Activated T-helper 2 cell treated with anti-CD3 and anti-CD28 coated beads, Interferon-gamma antibody, Interleukin-2, Interleukin-4, amounts not matched to agents 10 μg/mL and 5 μg/mL and 100 μg/mL, durations not matched to agents 14 hours and 24 hours and 36 hours (primary cell): ENCODE measurements at regions of chr14 and their contacts with region 1.

Region 1: DNA sequence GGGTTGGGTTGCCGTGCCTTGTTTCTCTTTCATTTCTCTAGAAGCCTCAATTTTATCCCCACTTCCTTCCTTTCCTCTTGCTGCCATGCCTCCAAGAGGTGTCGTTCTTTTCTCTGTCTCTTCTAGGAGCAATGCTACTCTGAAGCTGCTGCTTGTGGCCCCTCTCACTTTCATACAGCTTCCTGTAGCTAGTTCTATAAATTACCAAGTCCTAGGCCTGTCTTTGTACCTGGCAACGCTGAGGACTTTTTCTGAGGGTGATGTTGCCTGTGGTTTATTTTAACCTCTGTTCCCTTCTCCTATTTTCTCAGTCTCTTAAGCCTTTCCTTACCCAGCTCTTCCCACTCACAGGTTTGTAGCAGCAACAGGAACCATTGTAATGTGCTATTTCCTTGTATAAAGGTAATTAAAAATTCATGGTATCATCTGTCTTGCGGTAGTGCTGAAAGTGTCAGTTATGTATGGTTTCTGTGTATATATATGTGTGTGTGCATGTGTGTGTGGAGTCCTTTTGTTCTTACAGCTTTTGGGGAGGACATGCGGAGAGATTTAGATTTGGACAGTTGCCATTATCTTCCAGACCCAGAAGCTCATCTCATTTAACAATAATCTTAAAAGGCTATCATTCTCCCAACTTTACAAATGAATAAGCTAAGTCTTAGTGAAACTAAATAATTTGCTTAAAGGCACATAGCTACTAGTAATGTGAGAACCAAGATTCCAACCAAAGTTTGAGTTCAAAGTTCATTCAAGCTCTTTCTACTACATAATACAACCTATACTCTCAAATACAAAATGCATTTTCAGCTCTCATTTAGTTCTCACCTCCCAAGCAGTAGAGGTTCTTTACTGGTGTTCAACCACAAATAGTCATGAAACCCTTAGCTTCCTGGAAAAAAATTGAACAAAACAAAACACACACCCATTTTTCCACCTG is 43.8 kb downstream of the DDHD1 start:
- DNase-seq: peak; percentile 72
- H3K4me3 Mint-ChIP-seq: no peak overlapping the region
- H3K27ac Mint-ChIP-seq: no peak overlapping the region
- H3K4me1 Mint-ChIP-seq: peaks cover 29% of the 10 kb centered on the region
- H3K27me3 Mint-ChIP-seq: no peaks in the 10 kb centered on the region

Region 2: DNA sequence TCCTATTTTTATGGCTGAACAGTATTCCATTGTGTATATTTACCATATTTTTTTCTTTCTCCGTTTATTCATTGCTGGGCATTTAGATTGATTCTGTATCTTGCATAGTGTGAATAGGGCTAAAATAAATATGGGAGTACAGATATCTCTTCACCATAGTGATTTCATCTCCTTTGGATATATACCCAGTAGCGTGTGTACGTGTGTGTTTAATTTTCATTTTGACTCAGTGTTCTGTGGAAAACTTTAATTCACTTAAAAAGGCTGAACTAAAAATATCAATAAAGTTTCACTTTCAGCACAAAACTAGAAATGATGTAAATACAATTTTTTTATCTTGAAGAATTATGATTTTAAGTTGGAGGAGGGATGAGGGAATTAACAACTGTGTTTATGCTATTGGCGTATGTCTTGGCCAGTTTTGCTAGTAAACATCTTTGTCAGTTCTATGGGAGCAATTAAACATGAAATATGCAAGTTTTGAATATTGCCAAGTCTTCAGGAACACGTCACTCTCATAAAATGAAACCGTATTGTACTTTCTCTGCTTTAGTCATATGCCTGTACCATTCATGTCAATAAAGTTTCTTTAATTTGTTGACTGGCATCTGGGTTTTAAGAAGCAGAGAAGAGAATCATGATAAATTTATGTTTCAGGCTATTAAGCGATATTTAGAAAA is 695.5 kb before region 1 on chr14:
- intact Hi-C with region 1: loop called (anchors 2 kb)
- DNase-seq: no peak
- H3K4me3 Mint-ChIP-seq: peak overlapping the region; percentile 67
- H3K27ac Mint-ChIP-seq: peak overlapping the region; percentile 97
- H3K4me1 Mint-ChIP-seq: peaks cover 66% of the 10 kb centered on the region
- H3K27me3 Mint-ChIP-seq: no peaks in the 10 kb centered on the region

Region 3: DNA sequence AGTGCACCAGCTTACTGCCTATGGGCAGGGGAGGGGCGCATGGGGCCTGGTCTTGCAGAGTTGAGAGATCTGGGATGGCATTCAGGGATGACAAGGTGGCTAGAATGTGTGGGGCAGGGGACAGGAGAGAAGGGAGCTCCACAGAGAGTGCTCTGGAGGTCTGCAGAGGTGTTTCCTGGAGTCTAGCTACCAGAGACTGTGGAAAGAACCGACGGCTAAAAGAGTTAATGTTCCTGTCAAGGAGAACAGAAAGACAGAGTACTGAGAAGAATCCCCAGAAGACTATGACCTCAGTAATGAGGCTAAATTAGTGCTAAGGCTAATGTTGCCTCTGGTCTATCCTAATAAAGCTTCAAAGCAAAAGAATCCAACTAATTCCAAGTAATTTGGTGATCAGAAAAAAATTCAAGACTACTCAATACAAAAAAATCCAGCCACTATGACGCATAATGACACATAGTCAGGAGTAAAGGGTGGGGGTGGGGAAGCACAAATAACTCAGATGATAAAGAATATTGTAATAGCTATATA is 203.2 kb before region 1 on chr14:
- intact Hi-C with region 1: no loop called
- DNase-seq: no peak
- H3K4me3 Mint-ChIP-seq: no peak overlapping the region
- H3K27ac Mint-ChIP-seq: no peak overlapping the region
- H3K4me1 Mint-ChIP-seq: peaks cover 3% of the 10 kb centered on the region
- H3K27me3 Mint-ChIP-seq: peaks cover 36% of the 10 kb centered on the region

Region 4: DNA sequence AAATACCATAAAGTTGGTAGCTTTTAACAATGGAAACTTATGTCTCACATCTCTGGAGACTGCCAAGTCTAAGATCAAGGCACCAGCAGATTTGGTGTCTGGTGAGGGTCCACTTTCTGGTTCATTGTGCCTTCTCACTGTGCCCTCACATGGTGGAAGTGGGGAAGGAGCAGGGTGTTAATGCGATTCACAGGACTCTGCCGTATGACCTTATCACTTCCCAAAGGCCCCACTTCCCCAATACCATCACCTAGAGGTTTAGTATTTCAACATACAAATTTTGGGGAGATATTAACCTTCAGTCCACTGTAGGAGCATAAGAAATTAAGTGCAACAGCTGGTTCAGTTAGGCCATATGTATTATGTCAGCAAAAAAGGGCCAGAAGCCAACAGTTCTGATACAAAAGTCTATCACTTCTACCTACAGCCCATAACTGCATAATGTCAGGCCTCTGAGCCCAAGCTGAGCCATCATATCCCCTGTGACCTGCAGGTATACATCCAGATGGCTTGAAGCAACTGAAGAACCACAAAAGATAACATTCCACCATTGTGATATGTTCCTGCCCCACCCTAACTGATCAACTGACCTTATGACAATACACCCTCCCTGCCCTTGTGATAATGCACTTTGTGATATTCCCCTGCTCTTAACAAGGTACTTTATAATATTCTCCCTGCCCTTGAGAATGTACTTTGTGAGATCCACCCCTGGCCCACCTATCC is 19.1 kb after region 1 on chr14:
- intact Hi-C with region 1: no loop called
- DNase-seq: no peak
- H3K4me3 Mint-ChIP-seq: no peak overlapping the region
- H3K27ac Mint-ChIP-seq: peak overlapping the region; percentile 35
- H3K4me1 Mint-ChIP-seq: peaks cover 20% of the 10 kb centered on the region
- H3K27me3 Mint-ChIP-seq: no peaks in the 10 kb centered on the region

Region 5: DNA sequence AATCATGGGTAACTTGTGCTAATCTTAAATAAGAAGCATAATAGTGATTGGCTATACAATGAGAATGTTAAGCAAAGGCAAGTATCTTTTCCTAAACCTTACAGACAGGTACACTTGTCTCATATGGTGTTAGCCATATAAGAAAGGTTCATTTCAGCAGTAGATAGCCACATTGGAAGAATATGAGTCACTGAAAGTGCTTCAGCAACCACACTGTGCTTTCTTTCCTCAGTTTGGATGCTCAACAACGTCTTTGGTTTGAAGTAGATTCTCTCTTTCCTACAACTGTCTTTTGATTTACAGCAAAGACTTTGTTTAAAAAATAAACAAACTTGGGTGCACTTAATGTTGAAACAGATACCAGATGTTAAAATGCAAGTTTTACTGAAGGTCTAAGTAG is 34.9 kb after region 1 on chr14:
- intact Hi-C with region 1: loop called (anchors 1 kb)
- DNase-seq: no peak
- H3K4me3 Mint-ChIP-seq: no peak overlapping the region
- H3K27ac Mint-ChIP-seq: peak overlapping the region; percentile 49
- H3K4me1 Mint-ChIP-seq: peaks cover 58% of the 10 kb centered on the region
- H3K27me3 Mint-ChIP-seq: no peaks in the 10 kb centered on the region

Region 6: DNA sequence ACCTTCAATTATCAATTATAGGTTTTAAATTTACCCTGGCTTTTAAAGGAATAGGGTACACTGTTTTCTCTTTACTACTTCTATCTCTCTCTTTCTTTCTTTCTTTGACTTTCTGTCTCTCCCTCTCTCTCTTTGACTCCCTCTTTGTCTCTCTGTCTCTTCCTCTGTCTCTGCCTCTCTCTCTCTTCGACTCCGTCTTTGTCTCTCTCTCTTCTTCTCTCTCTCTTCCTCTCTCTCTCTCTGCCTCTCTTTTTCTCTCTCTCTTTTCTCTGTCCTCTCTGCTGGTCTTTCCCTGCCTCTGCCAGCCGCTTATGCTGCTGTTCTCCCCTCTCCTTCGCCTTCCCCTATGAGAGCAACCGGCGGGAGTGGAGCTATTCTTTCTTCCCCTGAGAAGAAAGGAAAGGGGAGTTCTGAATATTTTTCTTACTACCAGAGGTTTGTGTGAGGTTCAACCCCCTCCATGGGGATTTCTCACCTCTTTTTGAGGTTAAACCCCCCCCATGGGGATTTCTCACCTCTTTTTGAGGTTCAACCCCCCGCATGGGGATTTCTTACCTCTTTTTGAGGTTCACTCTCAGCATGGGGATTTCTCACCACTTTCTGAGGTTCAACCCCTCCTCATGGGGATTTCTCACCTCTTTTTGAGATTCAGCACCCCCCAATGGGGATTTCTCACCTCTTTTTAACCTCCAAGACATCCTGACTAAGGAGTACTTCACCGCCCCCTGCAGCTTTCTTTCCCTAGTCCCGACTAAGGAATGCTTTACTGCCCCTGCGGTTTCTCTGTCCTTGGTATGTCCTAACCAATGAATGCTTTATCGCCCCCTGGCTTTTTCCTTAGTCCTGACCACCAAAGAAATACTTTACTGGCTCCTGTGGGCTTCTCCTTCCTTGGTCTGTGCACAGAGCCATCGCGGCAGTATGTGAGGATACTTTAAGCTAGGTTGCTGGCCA is 71.2 kb after region 1 on chr14:
- intact Hi-C with region 1: loop called (anchors 2 kb)
- DNase-seq: no peak
- H3K4me3 Mint-ChIP-seq: no peak overlapping the region
- H3K27ac Mint-ChIP-seq: peak overlapping the region; percentile 40
- H3K4me1 Mint-ChIP-seq: peaks cover 26% of the 10 kb centered on the region
- H3K27me3 Mint-ChIP-seq: peaks cover 1% of the 10 kb centered on the region

Region 7: GRCh38 chr14:53190938-53191337 is 81.6 kb after region 1 on chr14:
- intact Hi-C with region 1: loop called (anchors 1 kb)
- DNase-seq: no peak
- H3K4me3 Mint-ChIP-seq: no peak overlapping the region
- H3K27ac Mint-ChIP-seq: peak overlapping the region; percentile 84
- H3K4me1 Mint-ChIP-seq: peaks cover 33% of the 10 kb centered on the region
- H3K27me3 Mint-ChIP-seq: no peaks in the 10 kb centered on the region

Region 8: GRCh38 chr14:53432378-53432802 is 323.0 kb after region 1 on chr14:
- intact Hi-C with region 1: no loop called
- DNase-seq: peak; percentile 11
- H3K4me3 Mint-ChIP-seq: no peak overlapping the region
- H3K27ac Mint-ChIP-seq: no peak overlapping the region
- H3K4me1 Mint-ChIP-seq: peaks cover 10% of the 10 kb centered on the region
- H3K27me3 Mint-ChIP-seq: no peaks in the 10 kb centered on the region

Region 9: GRCh38 chr14:54955143-54955542 is 1845.8 kb after region 1 on chr14:
- intact Hi-C with region 1: no loop called
- DNase-seq: no peak
- H3K4me3 Mint-ChIP-seq: no peak overlapping the region
- H3K27ac Mint-ChIP-seq: no peak overlapping the region
- H3K4me1 Mint-ChIP-seq: no peaks in the 10 kb centered on the region
- H3K27me3 Mint-ChIP-seq: no peaks in the 10 kb centered on the region